Vagina (tissue), 2 donors: ENCODE measurements at regions of chr11 and their contacts with region 1.

Region 1: GRCh38 chr11:727859-728748 is 19.2 kb upstream of the TALDO1 start:
- DNase-seq: no peak
- H3K4me3 ChIP-seq: no peak overlapping the region
- H3K27ac ChIP-seq: peak overlapping the region; percentile 81
- H3K4me1 ChIP-seq: peaks cover 39% of the 10 kb centered on the region
- H3K27me3 ChIP-seq: no peaks in the 10 kb centered on the region
- CTCF ChIP-seq: peak; percentile 89 to 98 (median 97)
- POLR2A ChIP-seq: no peak

Region 2: DNA sequence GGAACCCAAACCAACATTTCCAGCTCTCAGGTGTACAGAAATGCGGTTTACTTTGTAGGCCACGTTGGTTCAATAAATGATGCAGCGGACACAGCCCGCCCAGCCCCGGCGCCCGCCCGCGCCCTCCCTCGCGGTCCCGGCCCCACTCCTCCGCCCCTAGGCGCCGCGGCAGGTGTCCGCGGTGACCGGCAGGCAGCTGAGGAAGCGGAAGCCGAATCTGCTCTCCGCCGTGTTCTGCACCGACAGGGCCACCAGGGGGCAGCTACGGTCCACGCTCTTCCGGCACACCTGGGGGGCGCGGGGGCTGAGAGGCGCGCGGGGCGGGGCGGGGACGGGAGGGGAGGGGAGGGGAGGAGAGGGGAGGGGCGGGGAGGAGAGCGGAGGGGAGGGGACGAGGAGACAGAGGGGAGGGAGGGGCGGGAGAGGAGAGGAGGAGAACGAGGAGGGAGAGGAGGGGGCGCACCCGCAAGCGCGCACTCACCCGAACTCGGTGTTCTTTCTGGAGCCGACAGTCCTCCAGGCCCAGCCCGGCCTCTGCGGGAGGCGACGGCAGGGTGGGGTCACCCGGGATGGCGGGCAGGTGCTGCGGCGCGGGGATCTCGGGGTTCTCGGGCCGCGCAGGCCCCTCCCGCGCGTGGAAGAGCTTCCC is 173.2 kb before region 1 on chr11:
- intact Hi-C with region 1: loop called (anchors 10 kb)
- DNase-seq: no peak
- H3K4me3 ChIP-seq: peak overlapping the region; percentile 30 to 32
- H3K27ac ChIP-seq: no peak overlapping the region
- H3K4me1 ChIP-seq: peaks cover 21% of the 10 kb centered on the region
- H3K27me3 ChIP-seq: peaks cover 14% of the 10 kb centered on the region
- CTCF ChIP-seq: peak; percentile 32 to 61 (median 41)
- POLR2A ChIP-seq: no peak

Region 3: GRCh38 chr11:662689-663274 is 65.3 kb before region 1 on chr11:
- intact Hi-C with region 1: loop called (anchors 5 kb)
- DNase-seq: no peak
- H3K4me3 ChIP-seq: no peak overlapping the region
- H3K27ac ChIP-seq: no peak overlapping the region
- H3K4me1 ChIP-seq: peaks cover 17% of the 10 kb centered on the region
- H3K27me3 ChIP-seq: no peaks in the 10 kb centered on the region
- CTCF ChIP-seq: peak; percentile 41 to 73 (median 69)
- POLR2A ChIP-seq: no peak